ENCODE measurements at regions of chr14 and their contacts with region 1.

Region 1: GRCh38 chr14:101843665-101844064 is 82.2 kb downstream of the PPP2R5C start:
- DNase-seq: peak; percentile 94
- ATAC-seq: peak; percentile 87
- H3K4me3 ChIP-seq: peak overlapping the region in 1 of 5 experiments; percentile 4
- H3K4me3 Mint-ChIP-seq: peak overlapping the region; percentile 67
- H3K27ac ChIP-seq: peak overlapping the region; percentile 37 to 75
- H3K27ac Mint-ChIP-seq: peak overlapping the region; percentile 81
- H3K4me1 ChIP-seq: peaks cover 49 to 51% of the 10 kb centered on the region in 2 donors
- H3K4me1 Mint-ChIP-seq: peaks cover 79% of the 10 kb centered on the region
- H3K27me3 ChIP-seq: no peaks in the 10 kb centered on the region
- H3K27me3 Mint-ChIP-seq: no peaks in the 10 kb centered on the region
- CTCF ChIP-seq: peak; percentile 87

Region 2: GRCh38 chr14:101761032-101761880 is 82.4 kb before region 1 on chr14 and contains the start of gene PPP2R5C:
- CTCF ChIA-PET with region 1: interaction called, 190 read pairs
- POLR2A ChIA-PET with region 1: interaction called, 7 read pairs
- intact Hi-C with region 1: loop called (anchors 1 kb)
- DNase-seq: peak; percentile 93
- ATAC-seq: peak; percentile 63
- H3K4me3 ChIP-seq: peak within 1 kb of the TSS; percentile 73 to 96 (median 87)
- H3K4me3 Mint-ChIP-seq: peak within 1 kb of the TSS; percentile 94
- H3K27ac ChIP-seq: peak within 1 kb of the TSS; percentile 66 to 78
- H3K27ac Mint-ChIP-seq: peak within 1 kb of the TSS; percentile 92
- H3K4me1 ChIP-seq: peaks cover 11 to 12% of the 10 kb centered on the region in 2 donors
- H3K4me1 Mint-ChIP-seq: peaks cover 14% of the 10 kb centered on the region
- H3K27me3 ChIP-seq: no peaks in the 10 kb centered on the region
- H3K27me3 Mint-ChIP-seq: no peaks in the 10 kb centered on the region
- CTCF ChIP-seq: no peak
- total RNA-seq, gene PPP2R5C: 330 and 337 TPM in 2 replicates

Region 3: DNA sequence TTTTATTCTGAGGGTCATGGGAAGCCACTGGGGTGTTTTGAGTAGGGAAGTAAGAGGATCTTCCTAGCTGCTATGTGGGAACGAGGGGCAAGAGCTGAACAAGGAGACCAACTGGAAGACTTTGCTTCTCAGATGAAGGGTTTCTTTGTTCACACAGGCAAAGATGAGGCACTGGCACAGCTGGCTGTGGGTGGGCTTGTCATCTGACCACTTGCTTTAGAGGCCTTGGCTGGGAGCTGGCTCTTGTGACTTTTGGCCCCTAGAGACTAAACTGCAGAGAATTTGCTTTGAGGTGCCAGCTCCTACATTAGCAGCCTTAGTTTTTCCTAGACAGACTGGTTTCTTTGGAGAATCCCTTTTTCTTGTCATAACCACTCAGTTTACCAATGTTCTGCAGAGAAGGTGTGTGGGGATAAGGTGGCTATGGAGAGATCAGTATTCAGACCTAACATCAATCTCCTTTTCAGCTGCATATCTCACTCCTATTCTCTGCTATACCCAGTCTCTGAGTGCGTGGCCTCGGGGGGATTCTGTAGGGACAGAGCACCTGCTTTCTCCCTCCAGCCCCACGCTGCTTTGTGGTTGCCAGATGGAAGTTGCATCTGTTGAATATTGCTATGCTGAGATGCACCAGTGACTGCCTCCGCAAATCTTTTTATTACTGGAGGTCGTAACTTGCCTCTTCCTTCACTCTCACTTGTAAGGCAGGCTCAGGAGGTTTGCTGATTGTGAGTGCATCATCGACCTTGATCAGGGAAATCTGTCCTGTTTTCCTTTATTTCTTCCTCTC is 69.5 kb before region 1 on chr14:
- CTCF ChIA-PET with region 1: interaction called, 190 read pairs
- POLR2A ChIA-PET with region 1: interaction called, 9 read pairs
- intact Hi-C with region 1: loop called (anchors 1 kb)
- DNase-seq: peak; percentile 70
- ATAC-seq: peak; percentile 66
- H3K4me3 ChIP-seq: no peak overlapping the region
- H3K4me3 Mint-ChIP-seq: peak overlapping the region; percentile 36
- H3K27ac ChIP-seq: peak overlapping the region; percentile 54 to 63
- H3K27ac Mint-ChIP-seq: peak overlapping the region; percentile 93
- H3K4me1 ChIP-seq: peaks cover 40 to 55% of the 10 kb centered on the region in 2 donors
- H3K4me1 Mint-ChIP-seq: peaks cover 57% of the 10 kb centered on the region
- H3K27me3 ChIP-seq: no peaks in the 10 kb centered on the region
- H3K27me3 Mint-ChIP-seq: no peaks in the 10 kb centered on the region
- CTCF ChIP-seq: no peak

Region 4: GRCh38 chr14:101809671-101810514 is 33.8 kb before region 1 on chr14:
- CTCF ChIA-PET with region 1: interaction called, 10 read pairs
- POLR2A ChIA-PET with region 1: interaction called, 20 read pairs
- intact Hi-C with region 1: loop called (anchors 1 kb)
- DNase-seq: peak; percentile 93
- ATAC-seq: peak; percentile 93
- H3K4me3 ChIP-seq: peak overlapping the region; percentile 80 to 100 (median 97)
- H3K4me3 Mint-ChIP-seq: peak overlapping the region; percentile 92
- H3K27ac ChIP-seq: peak overlapping the region; percentile 95 to 100
- H3K27ac Mint-ChIP-seq: peak overlapping the region; percentile 98
- H3K4me1 ChIP-seq: peaks cover 39 to 43% of the 10 kb centered on the region in 2 donors
- H3K4me1 Mint-ChIP-seq: peaks cover 45% of the 10 kb centered on the region
- H3K27me3 ChIP-seq: no peaks in the 10 kb centered on the region
- H3K27me3 Mint-ChIP-seq: no peaks in the 10 kb centered on the region
- CTCF ChIP-seq: no peak

Region 5: GRCh38 chr14:101823511-101824120 is 20.0 kb before region 1 on chr14:
- CTCF ChIA-PET with region 1: interaction called, 19 read pairs
- POLR2A ChIA-PET with region 1: interaction called, 9 read pairs
- intact Hi-C with region 1: loop called (anchors 1 kb)
- DNase-seq: peak; percentile 55
- ATAC-seq: peak; percentile 28
- H3K4me3 ChIP-seq: peak overlapping the region in 4 of 5 experiments; percentile 20 to 58 (median 48)
- H3K4me3 Mint-ChIP-seq: peak overlapping the region; percentile 92
- H3K27ac ChIP-seq: peak overlapping the region; percentile 99 to 100
- H3K27ac Mint-ChIP-seq: peak overlapping the region; percentile 99
- H3K4me1 ChIP-seq: peaks cover 80 to 82% of the 10 kb centered on the region in 2 donors
- H3K4me1 Mint-ChIP-seq: peaks cover 88% of the 10 kb centered on the region
- H3K27me3 ChIP-seq: no peaks in the 10 kb centered on the region
- H3K27me3 Mint-ChIP-seq: no peaks in the 10 kb centered on the region
- CTCF ChIP-seq: no peak

Region 6: GRCh38 chr14:101876555-101876938 is 32.9 kb after region 1 on chr14:
- CTCF ChIA-PET with region 1: interaction called, 15 read pairs
- POLR2A ChIA-PET with region 1: interaction called, 3 read pairs
- intact Hi-C with region 1: loop called (anchors 1 kb)
- DNase-seq: peak; percentile 96
- ATAC-seq: peak; percentile 89
- H3K4me3 ChIP-seq: peak overlapping the region in 4 of 5 experiments; percentile 8 to 57 (median 29)
- H3K4me3 Mint-ChIP-seq: peak overlapping the region; percentile 71
- H3K27ac ChIP-seq: peak overlapping the region; percentile 94 to 96
- H3K27ac Mint-ChIP-seq: peak overlapping the region; percentile 72
- H3K4me1 ChIP-seq: peaks cover 52 to 58% of the 10 kb centered on the region in 2 donors
- H3K4me1 Mint-ChIP-seq: peaks cover 79% of the 10 kb centered on the region
- H3K27me3 ChIP-seq: no peaks in the 10 kb centered on the region
- H3K27me3 Mint-ChIP-seq: no peaks in the 10 kb centered on the region
- CTCF ChIP-seq: no peak

Region 7: DNA sequence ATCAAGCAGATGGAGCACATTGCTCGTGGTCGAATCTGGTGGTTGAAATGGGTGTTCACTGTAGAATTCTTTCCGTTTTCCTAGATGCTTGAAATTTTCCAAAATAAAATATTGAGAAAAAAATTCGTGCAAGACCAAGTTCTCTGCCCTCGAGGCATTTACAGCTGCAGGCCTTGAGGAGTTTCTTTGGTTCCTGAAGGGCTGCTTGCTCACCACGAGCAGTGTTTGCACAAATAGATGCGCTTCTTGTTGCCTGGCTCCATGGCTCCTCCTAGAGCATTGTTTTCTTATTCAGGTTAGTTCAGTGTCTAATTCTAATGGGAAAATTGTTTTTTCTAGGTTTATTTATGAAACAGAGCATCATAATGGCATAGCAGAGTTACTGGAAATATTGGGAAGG is 46.2 kb after region 1 on chr14:
- CTCF ChIA-PET with region 1: interaction called, 4 read pairs
- POLR2A ChIA-PET with region 1: interaction called, 4 read pairs
- intact Hi-C with region 1: loop called (anchors 5 kb)
- DNase-seq: peak; percentile 27
- ATAC-seq: no peak
- H3K4me3 ChIP-seq: no peak overlapping the region
- H3K4me3 Mint-ChIP-seq: no peak overlapping the region
- H3K27ac ChIP-seq: no peak overlapping the region
- H3K27ac Mint-ChIP-seq: no peak overlapping the region
- H3K4me1 ChIP-seq: no peaks in the 10 kb centered on the region
- H3K4me1 Mint-ChIP-seq: no peaks in the 10 kb centered on the region
- H3K27me3 ChIP-seq: no peaks in the 10 kb centered on the region
- H3K27me3 Mint-ChIP-seq: no peaks in the 10 kb centered on the region
- CTCF ChIP-seq: peak; percentile 19

Measured in B cell (primary cell).